IMR-90 (cell line): ENCODE measurements at regions of chr1 and their contacts with region 1.

Region 1: GRCh38 chr1:119903443-119903835 is 7.1 kb upstream of the ADAM30 start:
- DNase-seq: peak; percentile 39
- ATAC-seq: peak; percentile 32; the same call in 1 of the 2 replicates
- H3K4me3 ChIP-seq: no peak overlapping the region
- H3K27ac ChIP-seq: no peak overlapping the region
- H3K4me1 ChIP-seq: no peaks in the 10 kb centered on the region
- H3K27me3 ChIP-seq: no peaks in the 10 kb centered on the region; the same call in none of the 2 replicates
- CTCF ChIP-seq: no peak
- POLR2A ChIP-seq: no peak
- RAD21 ChIP-seq: no peak

Region 2: GRCh38 chr1:119885903-119886783 is 17.3 kb before region 1 on chr1:
- CTCF ChIA-PET with region 1: no interaction called
- POLR2A ChIA-PET with region 1: no interaction called
- dilution Hi-C with region 1: no loop called
- in situ Hi-C with region 1: no loop called
- intact Hi-C with region 1: no loop called
- DNase-seq: peak; percentile 39
- ATAC-seq: peak; percentile 72
- H3K4me3 ChIP-seq: no peak overlapping the region
- H3K27ac ChIP-seq: no peak overlapping the region
- H3K4me1 ChIP-seq: no peaks in the 10 kb centered on the region
- H3K27me3 ChIP-seq: peaks cover 2% of the 10 kb centered on the region; the same call in 1 of the 2 replicates
- CTCF ChIP-seq: peak; percentile 61
- POLR2A ChIP-seq: no peak
- RAD21 ChIP-seq: peak; percentile 62

Region 3: GRCh38 chr1:119935373-119935772 is 31.9 kb after region 1 on chr1:
- CTCF ChIA-PET with region 1: no interaction called
- POLR2A ChIA-PET with region 1: no interaction called
- dilution Hi-C with region 1: no loop called
- in situ Hi-C with region 1: no loop called
- intact Hi-C with region 1: loop called (anchors 5 kb)
- DNase-seq: no peak
- ATAC-seq: no peak
- H3K4me3 ChIP-seq: no peak overlapping the region
- H3K27ac ChIP-seq: no peak overlapping the region
- H3K4me1 ChIP-seq: peaks cover under 1% of the 10 kb centered on the region; the same call in 1 of the 2 replicates
- H3K27me3 ChIP-seq: no peaks in the 10 kb centered on the region
- CTCF ChIP-seq: no peak
- POLR2A ChIP-seq: no peak
- RAD21 ChIP-seq: no peak